Caco-2 (cell line): ENCODE measurements at regions of chr4 and their contacts with region 1.

Region 1: GRCh38 chr4:183142571-183143550 is 43.8 kb downstream of the WWC2 start:
- DNase-seq: no peak
- H3K4me3 ChIP-seq: no peak overlapping the region
- H3K4me3 Mint-ChIP-seq: no peak overlapping the region
- H3K27ac Mint-ChIP-seq: peak overlapping the region; percentile 5
- H3K4me1 ChIP-seq: peaks cover 26% of the 10 kb centered on the region
- H3K4me1 Mint-ChIP-seq: peaks cover 20% of the 10 kb centered on the region
- H3K27me3 ChIP-seq: no peaks in the 10 kb centered on the region
- H3K27me3 Mint-ChIP-seq: no peaks in the 10 kb centered on the region
- CTCF ChIP-seq: no peak

Region 2: GRCh38 chr4:182938205-182938645 is 204.6 kb before region 1 on chr4:
- CTCF ChIA-PET with region 1: no interaction called
- POLR2A ChIA-PET with region 1: no interaction called
- intact Hi-C with region 1: loop called (anchors 5 kb)
- DNase-seq: peak; percentile 79 to 85
- H3K4me3 ChIP-seq: no peak overlapping the region
- H3K4me3 Mint-ChIP-seq: no peak overlapping the region
- H3K27ac Mint-ChIP-seq: no peak overlapping the region
- H3K4me1 ChIP-seq: no peaks in the 10 kb centered on the region
- H3K4me1 Mint-ChIP-seq: no peaks in the 10 kb centered on the region
- H3K27me3 ChIP-seq: no peaks in the 10 kb centered on the region
- H3K27me3 Mint-ChIP-seq: peaks cover 3% of the 10 kb centered on the region
- CTCF ChIP-seq: peak; percentile 82 to 87